ENCODE measurements at regions of chr3 and their contacts with region 1.

Region 1: GRCh38 chr3:71461749-71462465 is 121.6 kb downstream of the FOXP1 start:
- DNase-seq: no peak
- ATAC-seq: no peak
- H3K4me3 Mint-ChIP-seq: no peak overlapping the region
- H3K27ac Mint-ChIP-seq: peak overlapping the region; percentile 94
- H3K4me1 Mint-ChIP-seq: peaks cover 82% of the 10 kb centered on the region
- H3K27me3 Mint-ChIP-seq: no peaks in the 10 kb centered on the region

Region 2: GRCh38 chr3:70231266-70231701 is 1230.6 kb before region 1 on chr3:
- CTCF ChIA-PET with region 1: no interaction called
- POLR2A ChIA-PET with region 1: no interaction called
- intact Hi-C with region 1: no loop called
- DNase-seq: no peak
- ATAC-seq: no peak
- H3K4me3 Mint-ChIP-seq: no peak overlapping the region
- H3K27ac Mint-ChIP-seq: no peak overlapping the region
- H3K4me1 Mint-ChIP-seq: no peaks in the 10 kb centered on the region
- H3K27me3 Mint-ChIP-seq: peaks cover 9% of the 10 kb centered on the region

Region 3: DNA sequence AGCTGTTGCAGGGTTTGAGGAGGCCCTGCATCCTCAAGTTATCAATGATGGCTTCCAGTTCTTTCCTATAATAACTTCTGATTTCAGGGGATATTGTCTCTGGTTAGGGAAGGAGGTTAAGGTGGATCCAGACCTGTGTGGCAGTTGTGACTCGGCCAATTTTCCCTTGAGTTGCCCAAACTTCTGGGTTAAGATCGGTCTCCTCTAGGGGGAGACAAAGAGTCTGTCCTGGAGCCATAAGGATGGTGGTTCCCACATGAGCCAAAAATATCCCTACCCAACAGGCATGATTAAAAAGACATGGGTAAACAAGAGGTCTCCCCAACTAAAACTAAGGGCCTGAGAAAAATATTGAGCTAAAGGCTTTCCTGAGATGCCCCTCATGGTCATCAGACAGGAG is 922.0 kb before region 1 on chr3:
- CTCF ChIA-PET with region 1: no interaction called
- POLR2A ChIA-PET with region 1: no interaction called
- intact Hi-C with region 1: no loop called
- DNase-seq: no peak
- ATAC-seq: no peak
- H3K4me3 Mint-ChIP-seq: no peak overlapping the region
- H3K27ac Mint-ChIP-seq: no peak overlapping the region
- H3K4me1 Mint-ChIP-seq: no peaks in the 10 kb centered on the region
- H3K27me3 Mint-ChIP-seq: peaks cover 5% of the 10 kb centered on the region

Region 4: DNA sequence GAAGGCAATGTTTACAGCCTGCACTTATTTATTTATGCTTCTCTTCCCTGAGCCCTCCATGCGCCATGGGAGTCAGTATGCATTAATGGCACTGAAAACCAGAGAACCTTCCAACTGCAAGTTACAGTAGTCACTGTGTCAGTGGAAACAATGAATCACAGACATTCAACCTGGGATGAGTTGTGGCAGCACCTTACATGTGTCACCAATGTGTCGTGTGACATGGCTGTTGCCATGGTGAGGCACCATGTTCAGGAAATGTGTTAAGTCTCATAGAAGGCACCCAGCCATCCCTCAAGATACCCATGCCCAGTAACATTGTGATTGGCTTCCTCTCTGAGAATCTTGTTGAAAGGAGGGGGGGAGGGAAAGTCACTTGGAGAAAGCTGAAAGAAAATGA is 16.7 kb after region 1 on chr3:
- CTCF ChIA-PET with region 1: interaction called, 7 read pairs
- POLR2A ChIA-PET with region 1: no interaction called
- intact Hi-C with region 1: loop called in 1 of 2 experiments (anchors 1 kb)
- DNase-seq: peak; percentile 89
- ATAC-seq: peak; percentile 98
- H3K4me3 Mint-ChIP-seq: peak overlapping the region; percentile 19
- H3K27ac Mint-ChIP-seq: peak overlapping the region; percentile 93
- H3K4me1 Mint-ChIP-seq: peaks cover 78% of the 10 kb centered on the region
- H3K27me3 Mint-ChIP-seq: no peaks in the 10 kb centered on the region

Region 5: GRCh38 chr3:71495708-71496472 is 34.0 kb after region 1 on chr3:
- CTCF ChIA-PET with region 1: interaction called, 3 read pairs
- POLR2A ChIA-PET with region 1: interaction called, 3 read pairs
- intact Hi-C with region 1: loop called (anchors 1 to 2 kb)
- DNase-seq: peak; percentile 47
- ATAC-seq: peak; percentile 71
- H3K4me3 Mint-ChIP-seq: peak overlapping the region; percentile 56
- H3K27ac Mint-ChIP-seq: peak overlapping the region; percentile 89
- H3K4me1 Mint-ChIP-seq: peaks cover 75% of the 10 kb centered on the region
- H3K27me3 Mint-ChIP-seq: no peaks in the 10 kb centered on the region

Measured in activated CD4-positive, alpha-beta T cell treated with anti-CD3 and anti-CD28 coated beads for 36 hours (primary cell).